AG04449 (cell line): ENCODE measurements at regions of chr3 and their contacts with region 1.

Region 1: GRCh38 chr3:48439820-48440589 is at the starts of genes CCDC51 and TMA7:
- DNase-seq: peak; percentile 72
- H3K4me3 ChIP-seq: peak within 1 kb of the TSS; percentile 98
- CTCF ChIP-seq: no peak

Region 2: DNA sequence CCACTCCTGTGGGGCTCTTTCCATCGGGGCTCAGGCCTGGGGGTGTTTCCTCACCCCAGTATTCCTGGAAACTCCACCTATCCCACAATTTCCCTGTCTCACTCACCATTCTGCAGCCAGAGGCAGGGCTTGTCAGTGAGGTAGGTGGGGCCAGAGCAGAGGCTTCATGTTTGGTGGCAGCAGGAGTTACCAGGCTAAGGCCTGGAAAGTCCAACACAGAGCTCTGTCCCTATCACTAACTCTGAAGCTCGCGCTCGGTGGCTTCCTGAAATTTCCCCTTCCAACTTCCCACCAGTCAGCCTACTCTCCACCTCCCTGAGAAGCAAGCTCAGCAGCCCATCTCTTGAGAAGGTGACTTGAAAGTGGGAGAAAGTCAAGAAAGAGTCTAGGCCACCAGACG is 296.0 kb before region 1 on chr3:
- CTCF ChIA-PET with region 1: no interaction called
- POLR2A ChIA-PET with region 1: no interaction called
- DNase-seq: no peak
- H3K4me3 ChIP-seq: no peak overlapping the region
- CTCF ChIP-seq: no peak

Region 3: DNA sequence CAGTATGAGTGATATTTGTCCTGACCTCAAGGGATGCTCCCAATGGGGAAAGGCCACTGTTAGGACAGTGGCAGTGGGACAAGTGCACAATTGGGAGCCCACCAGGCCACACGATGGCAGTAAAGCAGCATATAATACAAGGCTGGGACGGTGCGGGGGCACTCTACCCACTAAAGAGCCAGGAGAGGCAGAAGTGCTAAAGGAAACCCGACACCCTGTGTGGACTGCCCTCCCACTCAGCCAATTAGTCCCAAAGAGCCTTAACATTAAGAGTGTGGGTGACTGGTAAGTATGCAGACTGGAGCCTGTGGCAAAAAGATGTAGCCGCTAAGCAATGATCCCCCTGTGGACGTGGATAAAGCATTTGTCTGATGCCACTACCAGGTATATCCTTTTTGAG is 207.3 kb before region 1 on chr3:
- CTCF ChIA-PET with region 1: interaction called, 48 read pairs
- POLR2A ChIA-PET with region 1: no interaction called
- DNase-seq: no peak
- H3K4me3 ChIP-seq: no peak overlapping the region
- CTCF ChIP-seq: peak; percentile 57

Region 4: GRCh38 chr3:48273594-48274211 is 166.3 kb before region 1 on chr3:
- CTCF ChIA-PET with region 1: interaction called, 948 read pairs
- POLR2A ChIA-PET with region 1: interaction called, 3 read pairs
- DNase-seq: no peak
- H3K4me3 ChIP-seq: no peak overlapping the region
- CTCF ChIP-seq: peak; percentile 76

Region 5: DNA sequence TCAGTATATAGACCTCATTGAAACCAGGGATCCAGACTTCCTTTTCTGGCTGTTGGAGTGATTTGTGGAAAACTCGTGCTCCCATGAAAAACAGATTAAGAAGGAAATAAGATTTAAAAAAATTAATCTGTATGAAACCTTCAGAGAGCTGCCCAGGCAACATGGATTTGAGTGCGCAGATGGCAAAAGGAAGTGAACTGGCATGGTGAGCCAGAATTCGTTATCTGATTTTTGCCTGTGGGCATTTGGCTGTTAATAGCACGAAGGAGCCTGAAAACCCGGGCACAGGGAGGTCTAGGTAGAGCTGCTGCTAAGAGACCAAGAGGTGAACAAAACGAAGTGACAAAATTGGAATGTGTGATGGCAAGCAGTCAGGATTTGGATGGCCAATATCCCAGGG is 87.5 kb before region 1 on chr3:
- CTCF ChIA-PET with region 1: interaction called, 11 read pairs
- POLR2A ChIA-PET with region 1: no interaction called
- DNase-seq: no peak
- H3K4me3 ChIP-seq: no peak overlapping the region
- CTCF ChIP-seq: no peak

Region 6: DNA sequence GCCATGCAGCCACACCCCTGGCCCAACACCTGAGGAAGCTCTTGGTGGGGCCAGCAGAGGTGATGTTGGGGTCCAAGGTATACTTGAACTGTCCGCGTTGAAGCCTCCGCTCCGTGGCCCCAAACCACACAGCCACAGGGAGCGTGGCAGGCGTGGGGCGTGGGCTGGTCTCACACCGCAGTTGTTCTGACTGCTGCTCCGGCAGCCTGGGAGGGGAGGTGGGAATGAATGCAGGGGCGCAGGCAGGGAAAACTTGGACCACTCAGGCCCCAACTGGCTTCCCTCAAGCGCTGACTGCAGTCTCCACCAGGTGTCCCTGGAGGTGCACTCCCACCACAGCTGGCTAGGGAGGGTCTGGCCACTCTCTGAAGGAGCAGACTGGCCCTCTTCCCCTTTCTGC is 24.5 kb before region 1 on chr3:
- CTCF ChIA-PET with region 1: interaction called, 749 read pairs
- POLR2A ChIA-PET with region 1: no interaction called
- DNase-seq: no peak
- H3K4me3 ChIP-seq: no peak overlapping the region
- CTCF ChIP-seq: no peak

Region 7: DNA sequence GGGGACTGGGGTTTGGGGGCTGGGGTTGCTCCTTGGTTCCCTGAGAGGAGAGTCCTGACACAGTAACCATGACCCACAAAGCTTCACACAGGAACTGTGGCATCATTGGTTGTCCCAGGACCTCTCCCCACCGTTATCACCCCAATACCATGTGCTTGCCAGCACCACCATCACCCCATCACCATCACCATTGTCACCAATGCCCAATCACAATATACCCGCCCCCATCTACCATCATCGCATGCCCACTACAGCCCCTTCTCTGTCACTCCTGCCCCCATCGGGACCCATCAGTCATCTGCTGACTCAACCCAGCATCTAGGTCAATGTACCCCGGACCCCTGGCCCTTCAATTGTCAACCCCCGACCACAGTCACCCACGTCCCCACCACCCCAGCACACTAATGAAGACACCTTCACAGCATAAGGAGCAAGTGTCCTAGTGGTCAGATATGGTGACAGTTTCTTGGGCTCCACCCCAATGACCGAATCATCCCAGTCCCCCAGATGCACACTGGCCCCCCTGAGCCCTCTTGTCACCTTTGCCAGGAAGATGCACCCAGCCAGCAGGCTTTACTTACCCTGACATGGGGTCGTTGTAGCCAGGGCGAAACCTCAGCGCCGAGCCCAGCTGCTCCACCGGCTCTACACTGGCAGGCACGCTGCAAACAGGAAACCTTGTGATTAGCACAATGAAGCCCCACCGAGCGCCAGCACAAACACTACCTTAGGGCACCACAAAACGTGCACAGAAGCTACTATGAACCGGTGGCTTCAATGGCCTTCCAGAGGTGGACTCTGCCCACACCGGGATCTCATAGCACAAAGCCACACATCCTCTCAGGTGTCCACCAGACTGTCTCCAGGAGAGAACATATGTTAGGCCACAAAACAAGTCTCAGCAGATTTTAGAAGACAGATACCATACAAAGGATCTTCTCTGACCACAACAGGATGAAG is 38.9 kb after region 1 on chr3:
- CTCF ChIA-PET with region 1: no interaction called
- POLR2A ChIA-PET with region 1: no interaction called
- DNase-seq: no peak
- H3K4me3 ChIP-seq: no peak overlapping the region
- CTCF ChIP-seq: no peak

Region 8: GRCh38 chr3:48548729-48549705 is 109.0 kb after region 1 on chr3:
- CTCF ChIA-PET with region 1: interaction called, 25 read pairs
- POLR2A ChIA-PET with region 1: interaction called, 3 read pairs
- DNase-seq: no peak
- H3K4me3 ChIP-seq: no peak overlapping the region
- CTCF ChIP-seq: peak; percentile 95

Region 9: DNA sequence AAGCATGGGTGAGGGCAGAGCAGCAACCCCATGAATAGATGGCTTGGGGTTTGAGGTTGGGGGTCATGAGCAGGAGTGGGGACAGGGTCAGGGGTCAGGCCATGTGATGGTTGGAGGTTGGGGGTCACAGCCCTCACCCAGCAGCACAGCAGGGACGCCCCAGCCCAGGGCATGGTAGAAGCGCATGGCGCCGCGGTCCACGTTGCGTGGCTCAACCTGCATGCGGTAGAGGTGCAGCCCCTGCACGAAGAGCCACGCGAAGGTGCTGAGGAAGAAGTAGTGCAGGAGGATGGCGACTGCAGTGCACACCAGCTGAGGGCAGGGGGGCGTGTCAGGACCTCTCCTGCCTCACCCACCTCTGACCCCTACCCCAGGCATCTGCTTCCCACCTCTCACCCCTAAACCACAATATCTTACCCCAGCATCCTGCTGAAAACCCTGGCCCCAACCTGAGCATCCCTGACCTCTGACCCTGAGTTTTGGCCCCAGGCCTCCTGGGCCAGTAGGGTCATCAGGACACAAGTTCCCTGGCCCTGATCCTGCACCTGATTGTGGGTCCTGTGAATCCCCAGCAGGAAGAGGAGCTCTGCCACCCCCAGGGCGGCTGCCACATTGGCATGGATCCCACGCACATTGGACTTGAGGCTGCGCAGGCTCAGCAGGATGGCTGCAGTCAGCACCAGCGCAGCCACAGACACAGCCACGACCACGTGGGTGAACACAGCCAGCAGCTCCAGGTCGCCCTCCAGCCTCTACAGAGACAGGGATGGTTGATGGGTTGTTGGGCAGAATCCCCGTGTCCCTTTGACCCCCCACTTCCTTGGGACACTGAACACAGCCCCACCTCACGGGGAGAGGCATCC is 205.1 kb after region 1 on chr3:
- CTCF ChIA-PET with region 1: no interaction called
- POLR2A ChIA-PET with region 1: no interaction called
- DNase-seq: no peak
- H3K4me3 ChIP-seq: no peak overlapping the region
- CTCF ChIP-seq: no peak